GM12878 (cell line): ENCODE measurements at regions of chr1 and their contacts with region 1.

Region 1: GRCh38 chr1:152440635-152441471 is 26.8 kb upstream of the CRNN start:
- DNase-seq: peak; percentile 38
- ATAC-seq: peak; percentile 100
- H3K4me3 ChIP-seq: no peak overlapping the region
- H3K27ac ChIP-seq: no peak overlapping the region
- H3K4me1 ChIP-seq: no peaks in the 10 kb centered on the region
- H3K27me3 ChIP-seq: 0 out of 4 replicates have a peak, but pooled peaks cover 0 to 2% of the 10 kb centered on the region in 2 experiments
- CTCF ChIP-seq: peak; percentile 85 to 91 (median 85)
- EP300 ChIP-seq: no peak
- POLR2A ChIP-seq: no peak
- RAD21 ChIP-seq: peak; percentile 79

Region 2: GRCh38 chr1:152398812-152399698 is 41.8 kb before region 1 on chr1:
- CTCF ChIA-PET with region 1: interaction called, 8 read pairs
- POLR2A ChIA-PET with region 1: no interaction called
- RAD21 ChIA-PET with region 1: interaction called, 10 read pairs
- SMC1A ChIA-PET with region 1: interaction called, 4 read pairs
- in situ Hi-C with region 1: no loop called
- intact Hi-C with region 1: loop called (anchors 5 kb)
- DNase-seq: no peak
- ATAC-seq: peak; percentile 67
- H3K4me3 ChIP-seq: no peak overlapping the region
- H3K27ac ChIP-seq: no peak overlapping the region
- H3K4me1 ChIP-seq: no peaks in the 10 kb centered on the region
- H3K27me3 ChIP-seq: no peaks in the 10 kb centered on the region; a peak in 1 of 4 replicates
- CTCF ChIP-seq: peak; percentile 38 to 53 (median 51); a peak in 5 of 6 replicates
- EP300 ChIP-seq: no peak
- POLR2A ChIP-seq: no peak
- RAD21 ChIP-seq: peak; percentile 46

Region 3: DNA sequence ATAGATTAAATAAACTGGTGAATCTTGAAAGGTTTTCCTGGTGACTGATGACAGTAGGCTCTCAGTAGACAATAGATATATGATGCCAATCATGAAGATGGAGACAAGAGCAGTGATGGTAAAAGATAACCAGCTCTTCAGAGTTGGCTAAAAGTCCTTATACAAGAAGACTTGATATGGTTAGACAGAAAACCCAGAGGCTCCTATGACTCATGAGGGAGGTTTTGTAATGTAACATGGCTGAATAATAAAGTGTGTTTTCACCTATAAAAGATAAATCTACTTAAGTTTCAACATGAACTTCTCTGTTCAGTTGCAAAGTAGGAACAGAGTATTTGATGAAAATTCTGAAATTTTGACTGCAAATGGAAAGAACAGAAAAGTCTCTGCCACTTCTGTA is 14.1 kb before region 1 on chr1:
- CTCF ChIA-PET with region 1: interaction called, 10 read pairs
- POLR2A ChIA-PET with region 1: no interaction called
- RAD21 ChIA-PET with region 1: interaction called, 3 read pairs
- SMC1A ChIA-PET with region 1: interaction called, 4 read pairs
- in situ Hi-C with region 1: no loop called
- intact Hi-C with region 1: no loop called
- DNase-seq: no peak
- ATAC-seq: no peak
- H3K4me3 ChIP-seq: no peak overlapping the region
- H3K27ac ChIP-seq: no peak overlapping the region
- H3K4me1 ChIP-seq: no peaks in the 10 kb centered on the region
- H3K27me3 ChIP-seq: no peaks in the 10 kb centered on the region
- CTCF ChIP-seq: no peak
- EP300 ChIP-seq: no peak
- POLR2A ChIP-seq: no peak
- RAD21 ChIP-seq: no peak